Psoas muscle (tissue), 8 donors: ENCODE measurements at regions of chr2 and their contacts with region 1.

Region 1: DNA sequence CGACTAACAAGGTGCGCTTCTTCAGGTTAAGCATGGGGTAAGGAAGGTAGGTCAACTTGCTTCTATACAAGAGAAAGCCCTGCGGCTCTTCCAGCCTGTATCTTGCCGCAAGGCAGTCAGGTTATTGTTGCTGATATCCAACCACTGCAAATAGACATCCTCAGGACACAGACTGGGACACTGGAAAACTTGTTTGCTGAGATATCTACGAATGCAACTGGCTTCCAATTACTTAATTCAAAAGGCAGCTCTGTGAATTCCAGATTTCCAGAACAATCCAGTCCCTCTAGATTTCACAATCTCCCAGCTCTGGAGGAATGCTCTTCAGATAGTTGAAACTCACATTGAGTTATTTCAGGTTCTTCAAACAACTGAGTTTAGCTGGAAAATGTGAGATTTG is 34.7 kb upstream of the SP9 start:
- DNase-seq: no peak
- ATAC-seq: no peak
- H3K4me3 ChIP-seq: no peak overlapping the region
- H3K27ac ChIP-seq: no peak overlapping the region
- H3K4me1 ChIP-seq: no peaks in the 10 kb centered on the region
- H3K27me3 ChIP-seq: peaks cover 0 to 13% (median 3%) of the 10 kb centered on the region in 3 donors
- CTCF ChIP-seq: no peak

Region 2: GRCh38 chr2:174124181-174124580 is 175.9 kb before region 1 on chr2:
- intact Hi-C with region 1: no loop called
- DNase-seq: no peak
- ATAC-seq: no peak
- H3K4me3 ChIP-seq: no peak overlapping the region
- H3K27ac ChIP-seq: no peak overlapping the region
- H3K4me1 ChIP-seq: no peaks in the 10 kb centered on the region
- H3K27me3 ChIP-seq: no peaks in the 10 kb centered on the region
- CTCF ChIP-seq: no peak

Region 3: GRCh38 chr2:174259981-174260380 is 40.1 kb before region 1 on chr2:
- intact Hi-C with region 1: loop called in 1 of 2 experiments (anchors 10 kb)
- DNase-seq: no peak
- ATAC-seq: no peak
- H3K4me3 ChIP-seq: no peak overlapping the region
- H3K27ac ChIP-seq: no peak overlapping the region
- H3K4me1 ChIP-seq: no peaks in the 10 kb centered on the region
- H3K27me3 ChIP-seq: no peaks in the 10 kb centered on the region
- CTCF ChIP-seq: no peak